HepG2 (cell line): ENCODE measurements at regions of chr12 and their contacts with region 1.

Region 1: DNA sequence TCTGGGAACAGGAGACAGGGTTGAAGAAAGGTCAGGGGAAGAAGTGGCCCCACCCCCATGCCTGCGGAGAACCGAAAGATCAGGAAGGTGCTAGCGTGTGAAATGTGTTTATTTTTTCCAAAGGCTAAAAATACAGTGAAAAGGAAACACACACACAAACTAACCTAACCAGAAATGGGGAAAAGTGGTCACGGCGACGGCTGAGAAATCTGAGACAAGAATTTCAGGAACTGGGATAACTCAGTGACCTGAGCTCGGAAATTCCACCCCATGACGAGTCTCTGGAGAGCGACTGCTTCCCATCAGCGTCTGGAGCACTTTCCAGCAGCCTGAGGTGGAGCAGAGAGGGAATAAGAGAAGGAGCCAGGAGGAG is 16.6 kb upstream of the RND1 start:
- DNase-seq: no peak
- ATAC-seq: no peak
- H3K4me3 ChIP-seq: peak overlapping the region in 1 of 3 experiments; percentile 24; a peak in 2 of 6 replicates
- H3K27ac ChIP-seq: no peak overlapping the region
- H3K4me1 ChIP-seq: peaks cover 95% of the 10 kb centered on the region
- H3K27me3 ChIP-seq: peaks cover 2 to 19% of the 10 kb centered on the region in 2 experiments; a peak in 3 of 5 replicates
- CTCF ChIP-seq: no peak
- EP300 ChIP-seq: no peak
- POLR2A ChIP-seq: no peak
- RAD21 ChIP-seq: no peak

Region 2: DNA sequence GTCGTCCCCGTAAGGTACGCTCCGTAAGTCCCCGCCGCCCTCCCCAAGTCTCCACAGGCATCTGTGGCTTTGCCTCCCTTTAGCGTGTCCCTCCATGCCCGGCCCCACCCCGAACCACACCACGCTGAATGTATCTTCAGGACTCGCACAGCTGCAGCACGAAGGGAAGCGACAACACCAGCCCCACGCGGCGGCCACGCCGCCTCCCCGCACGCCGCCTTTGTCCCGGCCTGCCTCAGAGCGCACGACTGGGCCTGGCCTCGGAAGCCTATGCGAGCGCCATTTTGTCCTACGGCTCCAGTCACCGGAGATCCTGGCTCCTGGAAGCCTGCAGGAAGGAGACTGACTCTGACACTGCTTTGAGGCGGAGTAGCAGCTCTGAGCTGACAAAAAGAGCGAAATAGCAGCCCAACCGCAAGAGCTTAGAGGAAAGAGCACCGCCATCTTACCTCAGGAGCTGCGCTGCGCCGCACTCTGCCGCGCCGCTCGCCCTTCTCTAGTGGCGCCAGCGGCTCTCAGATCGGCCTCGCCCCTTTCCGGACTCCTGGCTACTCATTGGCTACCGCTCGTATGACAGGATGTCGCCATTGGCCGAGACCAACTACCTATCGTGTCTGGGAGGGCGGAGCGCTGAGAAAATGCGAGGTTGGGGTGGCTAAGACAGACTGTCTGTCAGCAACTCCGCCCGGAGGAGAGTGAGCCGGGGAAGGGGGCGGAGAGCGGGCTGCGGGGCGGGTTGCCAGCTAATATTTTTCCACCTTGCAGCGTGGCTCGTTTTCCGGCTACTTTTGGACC is 200.4 kb before region 1 on chr12 and contains the start of gene KANSL2:
- CTCF ChIA-PET with region 1: no interaction called
- POLR2A ChIA-PET with region 1: no interaction called
- in situ Hi-C with region 1: no loop called
- intact Hi-C with region 1: loop called (anchors 1 kb)
- DNase-seq: peak; percentile 98
- ATAC-seq: peak; percentile 97
- H3K4me3 ChIP-seq: peak within 1 kb of the TSS; percentile 82 to 91 (median 85)
- H3K27ac ChIP-seq: peak within 1 kb of the TSS; percentile 93
- H3K4me1 ChIP-seq: peaks cover 39% of the 10 kb centered on the region
- H3K27me3 ChIP-seq: no peaks in the 10 kb centered on the region; a peak in 1 of 5 replicates
- CTCF ChIP-seq: peak; percentile 32
- EP300 ChIP-seq: peak in 1 of 2 experiments; percentile 1; a peak in 1 of 4 replicates
- POLR2A ChIP-seq: peak; percentile 99
- RAD21 ChIP-seq: peak; percentile 8; the same call in 1 of the 2 replicates
- total RNA-seq, gene KANSL2: 40.1 and 41.3 TPM in 2 replicates

Region 3: DNA sequence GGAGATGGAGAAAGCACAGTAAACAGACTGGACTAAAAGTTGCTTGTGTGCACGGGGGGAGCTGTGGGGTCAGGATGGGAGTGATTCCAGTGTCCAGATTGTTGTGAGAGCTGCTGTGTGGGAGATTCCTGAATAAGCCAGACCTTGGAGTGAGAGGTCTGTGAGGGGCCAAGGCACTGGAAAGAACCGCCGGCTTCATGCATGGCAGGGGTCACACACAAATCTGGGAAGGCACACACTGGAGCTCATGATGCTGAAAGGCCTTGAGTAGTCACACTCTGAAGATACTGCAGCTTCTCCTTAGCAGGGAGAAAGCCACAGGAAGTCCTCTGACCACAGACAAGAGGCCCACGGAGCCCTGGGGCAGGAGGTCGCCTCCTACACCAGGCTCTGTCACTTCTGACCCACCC is 116.5 kb before region 1 on chr12:
- CTCF ChIA-PET with region 1: no interaction called
- POLR2A ChIA-PET with region 1: no interaction called
- in situ Hi-C with region 1: no loop called
- intact Hi-C with region 1: no loop called
- DNase-seq: no peak
- ATAC-seq: no peak
- H3K4me3 ChIP-seq: no peak overlapping the region
- H3K27ac ChIP-seq: no peak overlapping the region
- H3K4me1 ChIP-seq: no peaks in the 10 kb centered on the region
- H3K27me3 ChIP-seq: no peaks in the 10 kb centered on the region
- CTCF ChIP-seq: no peak
- EP300 ChIP-seq: no peak
- POLR2A ChIP-seq: no peak
- RAD21 ChIP-seq: no peak